ENCODE measurements at regions of chr2 and their contacts with region 1.

Region 1: DNA sequence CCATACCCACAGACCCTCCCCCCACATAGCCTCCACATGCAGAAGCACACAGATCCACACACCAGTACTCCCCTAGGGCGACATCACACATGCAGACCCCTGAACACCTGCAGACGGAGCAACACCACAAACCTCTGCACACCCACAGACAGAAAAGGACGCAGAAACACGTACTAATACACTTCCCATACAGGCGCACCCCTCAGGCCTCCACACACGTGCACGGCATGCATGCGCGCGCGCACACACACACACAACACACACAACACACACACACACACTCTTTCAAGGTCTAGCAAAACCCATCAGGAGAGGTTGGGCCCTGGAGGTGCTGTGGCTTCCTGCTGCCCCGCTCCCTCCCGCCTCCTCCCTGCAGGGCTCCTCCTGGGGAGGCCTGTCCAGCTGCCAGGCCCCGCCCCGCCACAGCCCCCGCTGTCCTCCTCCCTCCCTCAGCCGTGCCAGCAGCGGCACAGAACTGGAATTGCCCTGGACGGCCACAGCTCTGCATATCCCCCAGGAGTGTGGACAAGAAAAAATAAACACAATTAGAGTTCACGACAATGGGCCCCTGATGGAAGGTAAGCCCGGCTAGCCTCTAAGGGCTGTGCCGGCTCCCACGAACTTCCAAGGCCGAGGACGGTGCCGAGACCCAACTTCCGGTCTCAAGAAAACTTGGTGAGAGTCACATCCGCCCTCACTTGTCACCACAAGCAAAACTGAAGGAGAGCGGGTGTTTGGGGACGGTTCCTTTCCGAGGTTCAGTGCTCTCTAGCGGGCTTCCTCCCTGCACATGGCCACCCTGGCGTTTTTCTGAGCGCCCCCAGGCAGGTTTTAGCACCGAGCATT is 6.8 kb downstream of the ZFP36L2 start:
- DNase-seq: peak; percentile 89
- H3K4me3 Mint-ChIP-seq: peak overlapping the region; percentile 93
- H3K27ac Mint-ChIP-seq: peak overlapping the region; percentile 98
- H3K4me1 Mint-ChIP-seq: peaks cover 49% of the 10 kb centered on the region
- H3K27me3 Mint-ChIP-seq: no peaks in the 10 kb centered on the region

Region 2: DNA sequence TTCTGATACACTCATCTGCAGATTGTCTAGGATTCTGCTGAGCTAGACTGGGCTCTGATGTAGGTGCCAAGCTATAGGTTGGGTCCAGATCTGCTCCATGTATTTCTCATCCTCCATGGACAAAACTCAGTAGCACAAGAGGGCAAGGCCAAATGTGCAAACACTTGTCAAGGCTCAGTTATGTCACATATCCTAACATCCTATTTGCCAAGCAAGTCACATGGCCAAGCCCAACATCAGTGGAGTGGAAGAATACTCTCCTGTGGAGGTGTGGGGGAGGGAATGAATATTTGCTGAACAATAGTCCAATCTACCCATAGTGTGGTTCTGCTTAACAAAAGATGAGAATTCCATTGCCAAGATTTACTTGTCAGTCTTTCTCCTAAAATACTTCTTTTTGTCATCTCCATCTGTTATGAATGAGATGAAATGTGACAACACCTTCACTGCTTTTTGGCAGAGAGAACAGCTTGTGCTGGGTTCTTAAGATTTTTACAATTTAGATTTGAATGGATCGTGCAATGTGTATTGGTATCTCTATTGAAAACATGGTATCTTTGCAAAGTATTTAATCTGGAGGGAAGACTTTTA is 545.5 kb before region 1 on chr2:
- CTCF ChIA-PET with region 1: no interaction called
- intact Hi-C with region 1: no loop called
- DNase-seq: no peak
- H3K4me3 Mint-ChIP-seq: no peak overlapping the region
- H3K27ac Mint-ChIP-seq: no peak overlapping the region
- H3K4me1 Mint-ChIP-seq: peaks cover 6% of the 10 kb centered on the region
- H3K27me3 Mint-ChIP-seq: no peaks in the 10 kb centered on the region

Region 3: DNA sequence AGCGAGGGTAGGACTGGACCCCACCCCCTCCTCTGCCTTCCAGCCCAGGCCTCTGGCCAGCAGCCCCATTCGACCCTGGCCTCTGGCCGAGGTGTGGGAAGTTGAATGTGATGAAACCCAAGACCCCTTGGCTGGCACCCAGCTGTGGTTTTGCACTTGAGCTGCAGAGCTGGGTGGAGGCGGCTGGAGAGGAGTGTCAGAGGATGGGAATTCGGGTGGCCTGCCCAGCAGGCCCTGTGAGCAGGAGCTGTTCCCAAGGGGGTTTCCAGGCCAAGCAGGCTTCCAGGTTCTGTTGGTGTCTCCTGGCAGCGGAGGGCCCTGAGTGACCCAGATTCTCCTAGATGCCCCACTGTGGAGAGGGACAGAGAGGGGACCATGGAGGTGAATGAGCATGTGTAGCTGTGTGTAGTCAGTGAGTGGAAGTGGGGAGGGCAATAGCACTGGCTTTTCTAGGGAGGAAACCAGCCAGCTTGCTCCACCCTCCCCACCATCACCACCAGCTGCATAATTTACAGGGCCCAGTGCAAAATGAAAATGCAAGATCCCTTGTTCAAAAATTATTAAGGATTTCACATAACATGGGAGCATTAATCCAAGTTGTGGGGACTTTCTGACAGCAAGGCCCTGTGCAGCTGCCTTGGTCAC is 255.0 kb before region 1 on chr2:
- CTCF ChIA-PET with region 1: no interaction called
- intact Hi-C with region 1: no loop called
- DNase-seq: no peak
- H3K4me3 Mint-ChIP-seq: no peak overlapping the region
- H3K27ac Mint-ChIP-seq: no peak overlapping the region
- H3K4me1 Mint-ChIP-seq: peaks cover 15% of the 10 kb centered on the region
- H3K27me3 Mint-ChIP-seq: peaks cover 11% of the 10 kb centered on the region

Region 4: DNA sequence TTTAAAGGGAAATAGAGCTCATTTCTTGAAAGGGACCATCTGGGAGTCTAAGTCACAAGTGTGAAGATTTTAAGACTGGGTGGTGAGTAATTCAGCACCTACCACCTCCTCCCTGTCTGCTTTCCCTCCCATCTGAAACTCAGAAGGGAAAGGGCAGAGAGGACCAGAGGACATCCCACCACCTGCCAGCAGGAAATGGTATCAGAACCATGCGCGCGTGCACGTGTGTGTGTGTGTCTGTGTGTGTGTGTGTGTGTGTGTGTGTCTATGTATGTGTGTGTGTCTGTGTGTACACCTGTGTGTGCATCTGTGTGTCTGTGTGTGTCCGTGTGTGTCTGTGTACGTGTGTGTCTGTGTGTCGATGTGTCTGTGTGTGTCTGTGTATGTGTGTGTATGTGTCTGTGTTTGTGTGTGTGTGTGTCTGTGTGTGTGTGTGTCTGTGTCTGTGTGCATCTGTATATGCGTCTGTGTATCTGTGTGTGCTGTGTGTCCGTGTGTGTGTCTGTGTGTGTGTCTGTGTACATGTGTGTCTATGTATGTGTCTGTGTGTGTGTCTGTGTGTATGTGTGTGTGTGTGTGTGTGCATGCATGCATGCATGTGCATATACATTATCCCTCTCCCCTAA is 70.0 kb before region 1 on chr2:
- CTCF ChIA-PET with region 1: interaction called, 11 read pairs
- intact Hi-C with region 1: loop called (anchors 1 kb)
- DNase-seq: peak; percentile 90
- H3K4me3 Mint-ChIP-seq: peak overlapping the region; percentile 26
- H3K27ac Mint-ChIP-seq: peak overlapping the region; percentile 62
- H3K4me1 Mint-ChIP-seq: peaks cover 70% of the 10 kb centered on the region
- H3K27me3 Mint-ChIP-seq: no peaks in the 10 kb centered on the region

Region 5: DNA sequence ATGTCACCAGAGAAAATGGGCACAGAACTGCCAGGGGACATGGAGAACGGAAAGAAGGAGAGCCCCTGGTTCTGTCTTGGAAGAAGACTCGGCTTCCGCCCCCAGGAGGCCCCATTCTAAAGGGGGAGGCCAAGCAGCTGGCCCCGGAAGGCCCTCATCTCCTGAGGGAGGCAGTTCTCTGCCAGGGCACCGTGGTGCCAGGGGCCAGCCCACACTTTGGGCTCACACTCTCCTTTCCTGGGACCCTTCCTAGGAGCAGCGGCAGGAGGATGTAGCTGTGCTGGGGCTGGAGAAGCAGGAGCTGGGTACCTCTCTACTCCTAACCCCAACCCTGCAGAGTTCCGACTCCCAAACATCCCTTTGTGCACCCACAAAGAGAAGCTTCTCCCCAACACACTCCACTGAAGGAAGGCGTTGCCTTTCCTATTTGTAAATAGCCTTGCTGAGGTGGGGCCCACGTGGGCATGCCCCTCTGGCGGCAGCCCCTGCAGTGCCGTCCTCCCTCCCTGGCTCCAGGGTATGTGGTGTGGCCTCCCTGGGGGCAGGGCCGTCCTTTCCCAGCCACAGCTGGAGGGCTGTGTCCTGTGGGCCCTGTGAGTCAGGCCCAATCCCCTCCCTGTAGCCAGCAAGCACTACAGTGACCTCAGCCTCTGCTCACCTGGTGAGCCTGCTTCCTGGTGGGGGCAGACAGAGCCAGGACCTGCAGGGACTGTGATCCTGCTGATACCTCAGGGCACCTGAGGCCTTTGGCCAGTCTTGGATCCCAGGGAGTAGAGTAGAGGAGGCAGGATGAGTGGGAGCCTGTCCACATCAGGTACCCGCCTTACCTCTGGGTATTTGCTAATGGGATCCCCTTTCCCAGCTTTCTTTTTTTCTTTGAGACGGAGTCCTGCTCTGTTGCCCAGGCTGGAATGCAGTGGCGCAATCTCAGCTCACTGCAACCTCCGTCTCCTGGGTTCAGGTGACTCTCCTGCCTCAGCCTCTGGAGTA is 19.8 kb before region 1 on chr2:
- CTCF ChIA-PET with region 1: interaction called, 22 read pairs
- intact Hi-C with region 1: loop called (anchors 1 kb)
- DNase-seq: no peak
- H3K4me3 Mint-ChIP-seq: no peak overlapping the region
- H3K27ac Mint-ChIP-seq: no peak overlapping the region
- H3K4me1 Mint-ChIP-seq: peaks cover 48% of the 10 kb centered on the region
- H3K27me3 Mint-ChIP-seq: no peaks in the 10 kb centered on the region

Region 6: DNA sequence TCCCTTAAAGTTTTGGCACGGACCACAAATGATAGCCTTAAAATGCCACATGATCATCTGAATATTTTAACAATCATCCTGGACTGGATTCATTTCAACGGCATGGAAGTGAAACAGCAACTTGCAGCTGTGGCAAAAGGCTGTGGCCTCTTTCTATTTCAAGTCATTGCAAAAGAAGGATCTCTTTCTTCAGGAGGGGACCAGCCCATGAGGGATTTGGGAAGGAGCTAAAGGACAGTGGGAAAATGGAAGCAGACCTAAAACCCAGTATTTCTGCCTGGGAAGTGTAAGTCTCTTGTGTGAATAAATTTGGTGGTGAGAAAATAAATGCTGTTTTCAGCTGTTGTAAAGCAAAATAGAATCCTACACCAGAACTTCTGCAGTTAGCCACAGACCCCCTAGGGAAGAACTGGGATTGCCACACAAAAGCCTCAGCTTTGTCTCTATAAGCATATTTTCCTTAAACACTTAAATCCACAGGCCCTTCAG is 114.1 kb after region 1 on chr2:
- CTCF ChIA-PET with region 1: no interaction called
- intact Hi-C with region 1: no loop called
- DNase-seq: no peak
- H3K4me3 Mint-ChIP-seq: no peak overlapping the region
- H3K27ac Mint-ChIP-seq: no peak overlapping the region
- H3K4me1 Mint-ChIP-seq: no peaks in the 10 kb centered on the region
- H3K27me3 Mint-ChIP-seq: no peaks in the 10 kb centered on the region

Region 7: DNA sequence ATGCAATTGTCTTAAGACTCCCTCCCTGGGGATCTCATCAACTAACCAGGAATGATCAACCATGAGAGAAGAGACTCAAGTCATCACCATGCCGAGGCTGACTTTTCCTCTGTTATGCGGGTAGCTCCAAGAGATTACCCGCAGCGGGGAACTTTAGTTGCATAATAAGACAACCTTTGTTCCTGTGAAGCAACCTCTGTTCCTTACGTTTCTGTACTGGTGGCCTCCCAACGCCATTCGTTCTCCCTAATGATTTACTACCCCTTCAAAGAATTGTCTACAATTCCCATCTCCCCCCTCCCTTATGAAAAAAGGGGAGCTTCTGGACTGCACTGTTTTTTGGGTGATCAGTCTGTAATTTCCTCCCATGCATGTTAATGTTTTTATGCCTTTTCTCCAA is 842.3 kb after region 1 on chr2:
- CTCF ChIA-PET with region 1: no interaction called
- intact Hi-C with region 1: no loop called
- DNase-seq: no peak
- H3K4me3 Mint-ChIP-seq: no peak overlapping the region
- H3K27ac Mint-ChIP-seq: no peak overlapping the region
- H3K4me1 Mint-ChIP-seq: no peaks in the 10 kb centered on the region
- H3K27me3 Mint-ChIP-seq: peaks cover 4% of the 10 kb centered on the region

Measured in activated naive CD4-positive, alpha-beta T cell treated with anti-CD3 and anti-CD28 coated beads for 36 hours (primary cell).